ENCODE measurements at regions of chr19 and their contacts with region 1.

Region 1: DNA sequence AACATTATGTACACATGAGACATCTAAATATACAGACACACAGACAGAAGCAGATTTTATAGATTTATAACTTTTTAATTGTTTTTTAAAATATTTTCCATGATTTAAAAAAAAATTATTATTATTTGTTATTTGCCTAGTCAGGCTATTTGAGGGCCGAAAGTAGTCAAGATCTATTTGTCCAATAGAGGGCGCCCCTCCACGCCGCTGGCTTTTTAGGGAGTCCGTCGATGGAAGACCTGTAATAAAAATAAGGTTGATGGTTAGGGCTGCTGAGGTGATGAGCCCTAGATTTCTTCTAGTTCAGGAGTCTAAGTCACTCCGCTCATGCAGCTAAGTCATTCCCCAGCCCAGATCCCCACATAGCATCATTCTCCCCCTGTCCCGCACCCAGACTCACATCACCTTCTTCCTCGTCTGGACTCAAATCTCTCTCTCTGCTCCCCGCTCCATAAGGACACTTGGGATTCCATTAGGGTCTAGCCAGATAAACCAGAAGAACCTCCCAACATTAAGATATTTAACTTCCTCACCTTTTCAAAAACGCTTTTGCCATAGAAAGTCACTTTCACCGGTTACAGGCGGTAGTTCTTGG is 33.9 kb upstream of the CEACAM21 start:
- DNase-seq: peak; percentile 84
- ATAC-seq: peak; percentile 28
- H3K4me3 ChIP-seq: peak overlapping the region in 1 of 5 experiments; percentile 11
- H3K4me3 Mint-ChIP-seq: peak overlapping the region; percentile 66
- H3K27ac ChIP-seq: no peak overlapping the region
- H3K27ac Mint-ChIP-seq: peak overlapping the region; percentile 54
- H3K4me1 ChIP-seq: peaks cover 43 to 45% of the 10 kb centered on the region in 2 donors
- H3K4me1 Mint-ChIP-seq: peaks cover 55% of the 10 kb centered on the region
- H3K27me3 ChIP-seq: no peaks in the 10 kb centered on the region
- H3K27me3 Mint-ChIP-seq: no peaks in the 10 kb centered on the region
- CTCF ChIP-seq: peak; percentile 88

Region 2: DNA sequence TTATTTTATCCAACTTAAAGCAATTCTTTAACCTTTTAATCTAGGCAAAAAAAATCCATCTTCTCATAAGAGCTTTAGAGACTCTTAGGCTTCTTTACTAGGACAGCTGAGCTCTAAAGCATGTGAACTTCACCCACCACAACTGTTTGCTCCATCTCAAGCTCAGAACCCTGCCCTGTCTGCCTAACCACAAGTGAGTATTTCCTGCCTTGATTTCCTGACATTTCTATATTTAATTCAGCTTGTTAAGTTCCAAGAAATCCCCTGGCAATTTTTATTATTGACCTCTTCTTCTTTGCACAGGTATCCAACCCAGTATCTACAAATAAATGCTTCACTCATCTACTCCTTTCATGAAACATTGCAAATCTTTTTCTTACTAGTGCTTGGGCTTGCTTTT is 12.8 kb after region 1 on chr19:
- CTCF ChIA-PET with region 1: interaction called, 549 read pairs
- POLR2A ChIA-PET with region 1: interaction called, 10 read pairs
- intact Hi-C with region 1: no loop called
- DNase-seq: no peak
- ATAC-seq: peak; percentile 25
- H3K4me3 ChIP-seq: peak overlapping the region in 3 of 5 experiments; percentile 27 to 97 (median 32)
- H3K4me3 Mint-ChIP-seq: peak overlapping the region; percentile 42
- H3K27ac ChIP-seq: peak overlapping the region; percentile 43 to 92
- H3K27ac Mint-ChIP-seq: peak overlapping the region; percentile 62
- H3K4me1 ChIP-seq: peaks cover 61 to 66% of the 10 kb centered on the region in 2 donors
- H3K4me1 Mint-ChIP-seq: peaks cover 73% of the 10 kb centered on the region
- H3K27me3 ChIP-seq: no peaks in the 10 kb centered on the region
- H3K27me3 Mint-ChIP-seq: no peaks in the 10 kb centered on the region
- CTCF ChIP-seq: no peak